Stomach (tissue), 19 donors: ENCODE measurements at regions of chr12 and their contacts with region 1.

Region 1: DNA sequence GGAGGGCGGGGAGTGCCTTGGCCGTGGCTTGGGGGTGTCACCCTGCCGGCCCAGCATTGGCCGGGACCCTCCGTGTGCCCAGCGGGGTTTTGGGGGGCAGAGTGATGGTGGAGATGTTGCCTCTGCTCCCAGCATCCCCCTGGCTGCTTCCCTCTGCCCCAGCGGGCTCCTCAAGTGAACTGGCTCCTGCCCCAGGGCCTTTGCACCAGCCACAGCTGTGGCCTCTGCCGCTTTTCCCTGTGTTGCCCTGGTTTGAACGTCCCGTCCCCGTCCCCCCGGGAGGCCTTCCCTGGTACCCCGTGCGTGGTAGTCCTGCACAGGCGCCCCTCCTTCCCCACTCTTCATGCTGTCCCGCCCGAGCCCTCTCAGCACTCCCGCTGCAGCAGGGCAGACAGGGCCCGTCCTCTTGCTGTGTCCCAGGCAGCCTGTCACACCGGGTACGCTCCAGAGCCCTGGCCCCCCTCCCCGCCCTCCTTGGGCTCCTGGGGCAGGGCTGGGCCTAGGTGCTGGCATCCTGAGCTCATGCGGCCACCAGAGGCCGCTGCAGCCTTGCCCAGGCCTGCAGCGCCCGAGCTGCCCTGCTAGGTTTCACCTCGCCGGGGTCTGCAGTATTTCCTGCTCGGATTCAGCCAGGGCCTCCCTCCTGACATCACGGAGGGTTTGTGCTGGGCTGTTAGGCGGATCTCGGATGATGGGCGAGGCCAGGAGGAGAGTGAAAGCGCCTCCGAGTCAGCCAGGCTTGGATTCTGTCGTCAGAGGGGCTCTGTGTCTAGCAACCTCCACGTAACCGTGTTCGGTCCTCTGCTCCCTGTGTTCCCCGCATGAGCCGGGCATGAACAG is 9.5 kb downstream of the NOC4L start:
- DNase-seq: peak; percentile 68 to 93
- H3K4me3 ChIP-seq: peak overlapping the region in 3 of 4 donors; percentile 27 to 37 (median 29)
- H3K27ac ChIP-seq: peak overlapping the region in 1 of 5 donors; percentile 15
- H3K4me1 ChIP-seq: peaks cover 0 to 11% (median 10%) of the 10 kb centered on the region in 4 donors
- H3K27me3 ChIP-seq: no peaks in the 10 kb centered on the region
- CTCF ChIP-seq: peak in 5 of 7 experiments; percentile 82 to 93 (median 88)
- EP300 ChIP-seq: no peak
- POLR2A ChIP-seq: no peak

Region 2: DNA sequence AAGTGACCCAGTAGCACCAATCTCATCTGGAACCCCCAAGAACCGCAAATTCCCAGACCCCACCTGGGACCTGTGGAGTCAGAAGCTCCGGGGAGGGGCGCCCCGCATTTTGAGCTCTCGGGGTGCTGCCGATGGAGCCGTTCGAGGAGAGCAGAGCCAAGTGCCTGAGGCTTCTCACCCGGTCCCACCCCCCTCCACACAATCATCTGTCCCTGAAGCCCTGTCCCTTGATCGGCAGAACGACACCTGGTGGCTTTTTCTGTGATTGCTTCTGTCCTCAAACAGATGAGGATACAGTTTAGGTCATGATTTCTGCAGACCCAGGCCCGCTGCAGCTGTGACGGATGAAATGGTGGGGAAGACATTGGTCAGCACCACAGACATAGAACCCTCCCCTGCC is 65.2 kb after region 1 on chr12:
- intact Hi-C with region 1: loop called (anchors 5 kb)
- DNase-seq: peak in 1 of 2 donors; percentile 52
- H3K4me3 ChIP-seq: no peak overlapping the region
- H3K27ac ChIP-seq: no peak overlapping the region
- H3K4me1 ChIP-seq: peaks cover 0 to 4% (median 0%) of the 10 kb centered on the region in 4 donors
- H3K27me3 ChIP-seq: peaks cover 0 to 75% (median 0%) of the 10 kb centered on the region in 3 donors
- CTCF ChIP-seq: peak in 4 of 7 experiments; percentile 14 to 49 (median 28)
- EP300 ChIP-seq: no peak
- POLR2A ChIP-seq: no peak

Region 3: GRCh38 chr12:132327351-132328171 is 173.8 kb after region 1 on chr12:
- intact Hi-C with region 1: no loop called
- DNase-seq: peak in 1 of 2 donors; percentile 59
- H3K4me3 ChIP-seq: no peak overlapping the region
- H3K27ac ChIP-seq: peak overlapping the region in 2 of 5 donors; percentile 45 to 75
- H3K4me1 ChIP-seq: peaks cover 4 to 44% (median 28%) of the 10 kb centered on the region in 4 donors
- H3K27me3 ChIP-seq: peaks cover 17 to 100% (median 51%) of the 10 kb centered on the region in 3 donors
- CTCF ChIP-seq: no peak
- EP300 ChIP-seq: no peak
- POLR2A ChIP-seq: no peak